Endothelial cell of umbilical vein (primary cell): ENCODE measurements at regions of chr2 and their contacts with region 1.

Region 1: DNA sequence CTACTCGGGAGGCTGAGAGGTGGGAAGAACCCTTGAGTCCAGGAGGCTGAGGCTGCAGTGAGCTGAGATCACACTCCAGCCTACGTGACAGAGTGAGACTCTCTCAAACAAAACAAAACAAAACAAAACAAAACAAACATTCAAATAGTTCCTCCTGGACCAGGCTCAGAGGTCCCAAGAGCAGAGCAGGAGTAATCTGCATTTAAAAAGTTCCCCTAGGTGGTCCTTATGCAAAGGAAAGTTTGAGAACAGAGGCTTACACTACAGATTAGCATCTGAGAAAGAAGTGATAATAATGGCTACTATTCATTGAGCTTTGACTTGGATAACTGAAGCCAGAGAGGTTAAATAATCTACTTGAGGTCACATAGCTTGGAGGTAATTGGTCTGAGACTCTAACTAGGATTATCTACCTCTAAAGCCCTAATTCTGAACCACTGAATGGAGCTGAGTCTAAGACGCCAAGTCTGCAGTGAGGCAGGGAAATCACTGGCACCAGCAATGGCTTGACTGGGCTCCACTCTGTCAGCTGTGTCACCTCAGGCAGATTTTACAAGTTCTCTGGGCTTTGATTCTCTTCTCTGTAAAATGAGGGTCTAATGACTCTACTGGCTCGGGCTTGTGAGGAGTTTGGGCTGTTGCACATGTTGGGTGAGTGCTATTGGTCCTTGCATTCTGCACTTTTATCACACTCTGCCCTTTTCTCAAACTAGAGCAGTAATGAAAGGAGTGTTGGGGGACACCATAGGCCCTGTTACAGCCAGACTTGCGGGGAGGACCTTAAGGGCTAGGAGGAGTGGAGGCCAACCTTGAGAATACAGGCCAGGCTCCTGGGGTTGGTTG is 29.2 kb upstream of the DLX2 start:
- DNase-seq: no peak
- H3K4me3 ChIP-seq: no peak overlapping the region
- H3K27ac ChIP-seq: no peak overlapping the region
- H3K4me1 ChIP-seq: no peaks in the 10 kb centered on the region
- H3K27me3 ChIP-seq: peaks cover 3% of the 10 kb centered on the region in 2 experiments
- CTCF ChIP-seq: no peak
- POLR2A ChIP-seq: no peak

Region 2: DNA sequence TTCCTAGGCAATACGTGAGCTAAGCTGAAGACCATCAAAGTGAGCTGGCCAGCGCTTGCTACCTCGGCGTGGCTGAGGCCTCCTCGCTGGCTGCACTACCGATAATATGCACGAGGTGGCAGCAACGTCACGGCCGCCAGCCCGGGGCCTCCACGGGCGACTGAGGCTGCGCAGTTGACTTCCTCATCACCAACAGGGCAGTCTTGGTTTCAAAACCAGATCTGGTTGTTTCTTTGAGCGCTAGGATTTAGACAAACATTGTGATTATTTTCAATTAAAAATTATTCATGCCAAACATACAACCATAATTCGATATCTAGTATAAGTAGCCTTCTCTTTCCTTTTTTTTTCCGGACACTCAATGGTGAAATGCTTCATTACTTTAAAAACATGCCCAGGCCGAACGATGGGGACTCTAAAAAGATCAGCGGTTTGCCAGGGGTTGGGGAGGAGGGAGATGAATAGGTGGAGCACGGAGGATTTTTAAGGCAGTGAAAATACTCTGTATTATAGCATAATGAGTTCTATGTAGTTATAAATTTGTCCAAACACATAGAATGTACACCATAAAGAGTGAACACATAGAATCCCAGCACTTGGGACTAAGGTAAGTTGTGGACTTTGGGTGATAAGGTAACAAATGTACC is 557.7 kb before region 1 on chr2:
- CTCF ChIA-PET with region 1: interaction called, 68 read pairs
- POLR2A ChIA-PET with region 1: no interaction called
- dilution Hi-C with region 1: no loop called
- intact Hi-C with region 1: loop called (anchors 1 kb)
- DNase-seq: peak; percentile 84
- H3K4me3 ChIP-seq: no peak overlapping the region
- H3K27ac ChIP-seq: no peak overlapping the region
- H3K4me1 ChIP-seq: no peaks in the 10 kb centered on the region
- H3K27me3 ChIP-seq: peaks cover 2 to 3% of the 10 kb centered on the region in 2 experiments
- CTCF ChIP-seq: peak; percentile 91 to 94
- POLR2A ChIP-seq: no peak

Region 3: GRCh38 chr2:171703574-171704347 is 428.2 kb before region 1 on chr2:
- CTCF ChIA-PET with region 1: interaction called, 129 read pairs
- POLR2A ChIA-PET with region 1: no interaction called
- dilution Hi-C with region 1: no loop called
- intact Hi-C with region 1: no loop called
- DNase-seq: peak; percentile 59
- H3K4me3 ChIP-seq: no peak overlapping the region
- H3K27ac ChIP-seq: no peak overlapping the region
- H3K4me1 ChIP-seq: peaks cover 4% of the 10 kb centered on the region
- H3K27me3 ChIP-seq: no peaks in the 10 kb centered on the region
- CTCF ChIP-seq: peak; percentile 19 to 39
- POLR2A ChIP-seq: no peak

Region 4: DNA sequence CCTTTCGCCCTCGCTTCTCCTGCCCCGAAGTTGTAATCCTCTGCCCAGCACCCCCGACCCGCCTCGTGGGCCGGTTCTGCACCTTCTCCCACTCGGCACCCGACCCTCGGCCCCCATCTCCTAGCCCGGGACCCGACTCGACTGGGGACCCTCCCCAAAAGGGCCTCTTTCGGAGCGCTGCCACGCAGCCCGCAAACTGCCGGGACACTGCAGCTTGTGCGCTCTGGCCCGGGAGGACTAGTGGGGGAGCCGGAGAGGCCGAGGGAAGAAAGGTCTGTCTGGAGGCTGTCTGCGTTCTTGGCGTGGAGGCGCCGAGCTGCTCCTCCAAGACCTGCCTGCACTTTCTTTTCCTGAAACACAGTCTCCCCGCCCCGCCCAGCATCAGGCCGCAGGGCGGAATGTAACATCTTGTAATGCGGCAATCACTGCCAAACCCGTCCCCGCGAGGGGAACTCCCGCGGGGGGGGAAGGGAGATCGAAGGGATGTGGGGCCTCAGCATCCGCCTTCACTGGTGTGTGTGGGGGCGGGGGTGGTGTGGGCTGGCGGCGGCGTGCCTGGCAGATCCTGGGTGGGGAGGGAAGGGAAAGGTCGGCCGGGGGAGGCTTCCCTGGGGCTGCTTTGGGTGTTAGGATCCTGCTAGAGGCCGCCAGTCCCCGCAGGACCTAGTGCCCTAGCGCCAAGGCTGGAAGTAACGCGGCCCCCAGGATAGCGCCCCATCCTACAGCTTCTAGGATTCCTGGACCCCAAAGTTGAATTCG is 36.6 kb before region 1 on chr2:
- CTCF ChIA-PET with region 1: no interaction called
- POLR2A ChIA-PET with region 1: no interaction called
- dilution Hi-C with region 1: no loop called
- intact Hi-C with region 1: no loop called
- DNase-seq: peak; percentile 37
- H3K4me3 ChIP-seq: peak overlapping the region in 2 of 3 experiments; percentile 22 to 37
- H3K27ac ChIP-seq: no peak overlapping the region
- H3K4me1 ChIP-seq: peaks cover 31% of the 10 kb centered on the region
- H3K27me3 ChIP-seq: peaks cover 54 to 86% of the 10 kb centered on the region in 2 experiments
- CTCF ChIP-seq: no peak
- POLR2A ChIP-seq: no peak

Region 5: GRCh38 chr2:172113617-172114016 is 18.3 kb before region 1 on chr2:
- CTCF ChIA-PET with region 1: interaction called, 63 read pairs
- POLR2A ChIA-PET with region 1: interaction called, 3 read pairs
- dilution Hi-C with region 1: no loop called
- intact Hi-C with region 1: no loop called
- DNase-seq: peak; percentile 42
- H3K4me3 ChIP-seq: no peak overlapping the region
- H3K27ac ChIP-seq: no peak overlapping the region
- H3K4me1 ChIP-seq: peaks cover under 1% of the 10 kb centered on the region
- H3K27me3 ChIP-seq: no peaks in the 10 kb centered on the region
- CTCF ChIP-seq: no peak
- POLR2A ChIP-seq: no peak

Region 6: GRCh38 chr2:172147944-172148650 is 16.2 kb after region 1 on chr2:
- CTCF ChIA-PET with region 1: interaction called, 13 read pairs
- POLR2A ChIA-PET with region 1: no interaction called
- dilution Hi-C with region 1: no loop called
- intact Hi-C with region 1: no loop called
- DNase-seq: no peak
- H3K4me3 ChIP-seq: no peak overlapping the region
- H3K27ac ChIP-seq: no peak overlapping the region
- H3K4me1 ChIP-seq: no peaks in the 10 kb centered on the region
- H3K27me3 ChIP-seq: peaks cover 3 to 7% of the 10 kb centered on the region in 2 experiments
- CTCF ChIP-seq: no peak
- POLR2A ChIP-seq: no peak